Dorsolateral prefrontal cortex (tissue), 120 donors: ENCODE measurements at regions of chr4 and their contacts with region 1.

Region 1: DNA sequence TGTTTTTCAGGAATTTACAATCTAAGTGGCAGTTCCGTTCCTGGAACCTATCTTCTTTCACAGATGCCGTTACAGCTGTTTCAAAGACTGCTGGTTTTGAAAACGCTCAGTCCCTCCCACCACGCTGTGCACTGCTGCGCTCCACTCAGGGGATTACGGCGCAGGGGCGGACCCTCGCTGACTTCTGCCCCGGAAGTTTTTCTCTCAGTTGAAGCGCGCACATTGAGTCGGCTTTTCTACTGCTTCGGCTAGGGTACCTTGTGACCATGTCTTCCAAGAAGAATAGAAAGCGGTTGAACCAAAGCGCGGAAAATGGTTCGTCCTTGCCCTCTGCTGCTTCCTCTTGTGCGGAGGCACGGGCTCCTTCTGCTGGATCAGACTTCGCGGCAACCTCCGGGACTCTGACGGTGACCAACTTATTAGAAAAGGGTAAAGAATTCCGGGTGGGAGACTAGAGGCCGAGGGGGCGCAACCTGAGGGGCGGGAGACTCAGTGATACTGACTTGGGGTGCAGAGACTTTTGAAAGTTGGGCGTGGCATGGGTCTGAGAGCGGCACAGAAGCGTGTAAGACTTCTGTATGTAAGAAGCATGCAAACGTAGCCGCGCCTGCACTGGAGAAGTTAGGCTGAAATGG is 597 bp upstream of the NUDT6 start:
- DNase-seq: peak; percentile 81 to 94 (median 92)
- H3K4me3 ChIP-seq: peak overlapping the region; percentile 70 to 99 (median 89)
- H3K27ac ChIP-seq: peak overlapping the region in 57 of 59 donors; percentile 50 to 94 (median 83)
- H3K27me3 ChIP-seq: no peaks in the 10 kb centered on the region
- CTCF ChIP-seq: peak in 9 of 56 donors; percentile 2 to 26 (median 16)

Region 2: GRCh38 chr4:122732329-122733026 is 190.5 kb before region 1 on chr4 and contains the start of gene BBS12:
- intact Hi-C with region 1: loop called (anchors 2 to 5 kb)
- DNase-seq: peak; percentile 93 to 99 (median 99)
- H3K4me3 ChIP-seq: peak within 1 kb of the TSS; percentile 53 to 92 (median 79)
- H3K27ac ChIP-seq: peak within 1 kb of the TSS in 57 of 59 donors; percentile 7 to 85 (median 69)
- H3K27me3 ChIP-seq: no peaks in the 10 kb centered on the region
- CTCF ChIP-seq: peak in 49 of 56 donors; percentile 8 to 75 (median 43)
- total RNA-seq, gene BBS12: 2.7 to 12.5 (median 6.3) TPM